Common myeloid progenitor, CD34-positive (primary cell): ENCODE measurements at regions of chr1 and their contacts with region 1.

Region 1: GRCh38 chr1:236103646-236104218 is 38.6 kb upstream of the GPR137B start:
- DNase-seq: peak; percentile 62 to 80 (median 76)
- H3K4me3 ChIP-seq: no peak overlapping the region
- H3K27ac ChIP-seq: no peak overlapping the region
- H3K4me1 ChIP-seq: no peaks in the 10 kb centered on the region
- H3K27me3 ChIP-seq: no peaks in the 10 kb centered on the region

Region 2: DNA sequence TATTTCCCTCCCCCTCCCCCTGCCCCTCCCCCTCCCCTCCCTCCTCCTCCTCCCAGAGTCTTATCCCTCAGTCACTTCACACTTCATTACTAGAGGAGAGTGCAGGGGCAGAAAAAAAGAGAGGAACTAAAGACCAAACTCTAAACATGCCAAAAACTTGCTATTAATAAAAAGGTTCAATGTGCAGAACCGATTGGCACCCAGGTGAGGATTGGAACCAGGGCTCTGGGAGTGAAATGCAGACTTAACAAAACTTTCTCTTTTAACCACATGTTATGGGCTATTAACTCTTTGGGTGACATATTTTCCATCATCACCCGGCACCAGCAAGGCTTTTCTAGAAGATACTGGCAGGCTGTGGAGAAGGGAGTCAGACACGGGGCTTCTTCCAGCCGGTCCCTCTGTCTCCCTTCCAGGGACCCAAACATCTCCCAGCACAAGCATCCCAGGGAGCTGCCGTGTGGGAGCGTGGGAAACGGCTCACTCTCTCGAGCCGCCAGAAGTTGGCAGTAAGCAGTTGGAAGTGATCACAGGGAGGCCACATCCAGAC is 52.4 kb before region 1 on chr1:
- CTCF ChIA-PET with region 1: no interaction called
- POLR2A ChIA-PET with region 1: no interaction called
- DNase-seq: no peak
- H3K4me3 ChIP-seq: no peak overlapping the region
- H3K27ac ChIP-seq: no peak overlapping the region
- H3K4me1 ChIP-seq: peaks cover 0 to 9% (median 6%) of the 10 kb centered on the region in 4 experiments
- H3K27me3 ChIP-seq: no peaks in the 10 kb centered on the region

Region 3: DNA sequence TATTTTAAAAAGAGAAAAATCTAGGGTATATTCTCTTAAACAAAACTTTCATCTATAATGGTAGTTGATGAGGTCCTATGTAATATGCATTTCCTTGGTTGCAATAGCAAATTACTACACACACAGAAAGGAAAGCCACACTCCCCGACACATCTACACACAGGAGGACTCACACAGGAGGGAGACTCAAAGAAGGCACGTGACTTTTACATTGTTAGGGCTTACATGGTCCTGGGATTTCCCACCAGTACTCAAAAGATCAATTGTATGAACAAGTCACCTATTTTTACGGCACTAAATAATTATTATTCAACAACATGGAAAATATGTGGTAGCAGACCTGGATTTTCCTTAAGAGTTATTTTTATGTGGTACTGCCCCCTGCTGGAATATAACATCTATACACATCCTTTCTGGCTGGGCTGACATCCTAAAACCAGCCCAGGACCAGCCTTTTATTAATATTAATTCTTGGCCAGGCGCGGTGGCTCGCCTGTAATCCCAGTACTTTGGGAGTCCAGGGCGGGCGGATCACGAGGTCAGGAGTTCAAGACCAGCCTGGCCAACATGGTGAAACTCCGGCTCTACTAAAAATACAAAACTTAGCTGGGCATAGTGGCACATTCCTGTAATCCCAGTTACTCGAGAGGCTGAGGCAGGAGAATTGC is 386.1 kb after region 1 on chr1:
- CTCF ChIA-PET with region 1: interaction called, 21 read pairs
- POLR2A ChIA-PET with region 1: interaction called, 4 read pairs
- DNase-seq: peak; percentile 50 to 71 (median 64)
- H3K4me3 ChIP-seq: no peak overlapping the region
- H3K27ac ChIP-seq: no peak overlapping the region
- H3K4me1 ChIP-seq: peaks cover 2 to 17% (median 13%) of the 10 kb centered on the region in 4 experiments
- H3K27me3 ChIP-seq: no peaks in the 10 kb centered on the region